ENCODE measurements at regions of chr6 and their contacts with region 1.

Region 1: GRCh38 chr6:161370880-161371279 is 97.0 kb upstream of the AGPAT4 start:
- DNase-seq: peak; percentile 56 to 96 (median 72)

Region 2: DNA sequence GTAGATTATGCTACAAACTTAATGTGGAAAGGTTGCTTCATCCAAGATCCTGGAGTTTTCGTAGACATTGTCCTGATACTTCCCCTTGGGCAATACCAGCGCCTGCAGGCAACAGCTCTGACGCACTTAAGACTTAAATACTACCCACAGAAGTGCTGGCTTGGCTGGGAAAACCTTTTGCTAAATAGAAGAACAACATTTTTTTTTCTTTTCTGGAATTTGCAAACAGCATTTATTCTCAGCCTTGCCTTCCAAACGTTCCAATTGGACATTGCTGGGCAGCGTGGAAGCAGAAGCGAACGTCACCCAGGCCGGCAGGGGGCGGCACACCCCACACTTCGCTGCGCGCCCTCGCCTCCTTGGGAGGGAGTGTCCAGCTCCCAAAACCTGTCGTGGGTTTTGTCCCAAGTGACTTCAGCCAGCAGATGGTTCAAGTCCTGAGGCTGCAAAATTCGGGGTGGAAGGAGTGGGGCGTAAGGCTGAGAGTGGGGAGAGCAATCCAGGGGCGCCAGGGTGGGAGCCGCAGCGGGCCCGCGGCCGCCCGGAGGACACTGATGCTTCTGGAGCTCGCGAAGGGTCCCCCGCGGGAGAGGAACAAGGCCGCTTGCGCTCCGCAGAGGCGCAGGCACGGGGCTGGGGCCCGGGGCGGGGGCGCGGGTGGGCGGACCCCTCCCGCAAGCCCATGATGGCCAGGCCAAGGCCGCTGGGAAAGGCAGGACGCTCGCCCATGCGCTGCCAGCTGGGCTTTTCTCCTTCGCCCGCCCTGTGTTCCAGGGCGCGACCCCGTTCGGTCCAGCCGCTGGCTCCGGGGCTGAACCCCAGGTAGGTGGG is 440.1 kb before region 1 on chr6:
- intact Hi-C with region 1: loop called (anchors 2 kb)
- DNase-seq: peak; percentile 75 to 98 (median 84)

Region 3: DNA sequence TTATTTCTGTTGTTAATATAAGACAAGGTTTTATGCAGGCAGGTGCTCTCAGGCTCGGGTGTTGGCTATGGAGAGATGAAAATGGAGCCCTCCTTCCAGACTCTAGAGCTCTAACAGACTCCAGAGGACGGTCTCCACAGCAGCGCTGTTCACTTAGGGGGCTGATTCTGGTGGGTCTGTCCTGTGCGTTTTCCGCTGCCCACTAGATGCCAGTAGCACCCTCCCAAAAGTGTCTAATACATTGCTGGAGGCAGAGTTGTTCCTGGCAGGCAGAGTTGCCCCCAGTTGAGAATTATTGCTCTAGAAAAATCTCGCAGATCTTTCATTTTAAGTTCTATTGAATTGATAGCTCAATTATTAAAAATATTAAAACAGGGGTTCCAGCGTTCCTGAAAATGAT is 269.4 kb before region 1 on chr6:
- intact Hi-C with region 1: loop called (anchors 1 kb)
- DNase-seq: peak in 6 of 10 donors; percentile 22 to 87 (median 40)

Region 4: GRCh38 chr6:161168281-161168891 is 202.5 kb before region 1 on chr6:
- intact Hi-C with region 1: loop called (anchors 5 kb)
- DNase-seq: no peak

Region 5: GRCh38 chr6:161318456-161318855 is 52.4 kb before region 1 on chr6:
- intact Hi-C with region 1: loop called (anchors 5 kb)
- DNase-seq: peak in 7 of 10 donors; percentile 25 to 91 (median 57)